Heart right ventricle (tissue), 16 donors: ENCODE measurements at regions of chr2 and their contacts with region 1.

Region 1: DNA sequence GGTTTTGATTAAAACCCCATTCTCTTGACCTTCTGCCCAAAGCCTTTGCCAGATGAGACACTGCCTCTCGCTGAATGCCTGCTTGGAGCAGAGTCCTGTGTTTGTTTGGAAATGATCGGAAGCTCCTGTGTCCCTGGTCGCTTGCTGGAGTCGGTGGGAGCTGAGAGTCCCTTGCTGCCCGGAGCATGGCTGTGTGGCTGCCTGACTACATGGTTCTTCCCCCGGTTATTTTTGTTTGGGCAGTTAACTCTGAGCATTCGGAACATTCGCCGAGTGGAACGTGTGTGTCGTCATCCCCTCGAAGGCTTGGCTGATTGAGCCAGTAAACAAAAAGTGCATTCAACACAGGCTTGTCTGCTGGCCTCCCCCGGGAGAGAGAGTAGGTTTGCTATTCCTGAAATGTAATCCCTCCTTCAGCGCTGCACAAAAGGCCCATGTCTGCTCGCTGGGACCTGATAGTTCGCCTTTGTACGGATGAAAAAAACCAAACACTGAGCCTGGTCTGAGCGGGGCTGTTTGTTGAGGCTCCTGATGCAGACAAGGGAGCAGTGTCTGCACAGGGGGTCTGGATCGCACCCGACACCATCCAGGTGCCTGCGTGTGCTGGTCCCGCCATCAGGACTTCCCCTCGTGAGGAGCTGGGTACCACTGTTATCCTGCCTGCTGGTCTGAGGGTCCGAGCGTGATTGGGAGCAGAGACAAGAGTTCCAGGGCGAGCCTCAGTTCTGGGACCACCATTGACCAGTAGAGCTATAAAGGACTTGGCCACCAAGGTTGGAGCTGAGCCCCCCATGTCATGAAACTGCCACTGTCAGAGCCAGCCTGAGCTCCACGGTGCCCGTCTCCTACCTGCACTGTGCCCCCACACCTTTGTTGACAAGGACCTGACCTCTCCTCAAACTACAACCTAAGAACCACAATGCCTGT is 83.8 kb downstream of the AGAP1 start:
- DNase-seq: peak; percentile 33 to 58
- ATAC-seq: peak; percentile 50 to 89 (median 79)
- H3K4me3 ChIP-seq: peak overlapping the region in 6 of 10 donors; percentile 9 to 31 (median 20)
- H3K27ac ChIP-seq: peak overlapping the region in 4 of 10 donors; percentile 4 to 62 (median 50)
- H3K4me1 ChIP-seq: peaks cover 4 to 34% (median 14%) of the 10 kb centered on the region in 9 donors
- H3K27me3 ChIP-seq: no peaks in the 10 kb centered on the region
- CTCF ChIP-seq: no peak

Region 2: DNA sequence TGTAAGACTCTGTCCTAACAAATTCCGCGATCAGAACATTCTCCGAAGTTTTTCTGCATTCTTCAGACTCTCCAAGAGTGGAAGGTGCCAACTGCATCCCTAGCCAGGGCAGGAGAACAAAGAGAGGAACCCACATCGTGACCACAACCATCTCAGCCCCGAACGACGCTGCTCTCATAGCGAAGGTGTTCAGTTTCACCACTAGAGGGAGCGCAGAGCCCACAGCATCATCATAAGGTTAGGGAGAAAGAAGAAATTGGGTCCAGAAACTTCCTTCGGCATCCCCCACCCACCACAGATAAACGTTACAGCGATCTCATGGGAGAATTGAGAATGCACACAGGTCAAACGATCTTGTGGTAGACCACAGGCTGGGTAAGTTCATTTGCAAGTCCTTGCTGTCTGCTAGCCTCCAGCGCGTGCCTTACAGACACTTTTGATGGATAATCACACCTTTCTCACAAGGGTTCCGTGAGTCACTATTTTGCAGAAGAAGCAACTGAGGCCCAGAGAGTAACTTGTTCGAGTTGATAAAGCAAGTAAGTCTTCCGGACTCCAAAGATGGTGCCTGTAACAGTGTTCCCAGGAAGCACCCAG is 1027.1 kb before region 1 on chr2:
- intact Hi-C with region 1: loop called in 1 of 10 experiments (anchors 5 kb)
- DNase-seq: peak; percentile 48 to 64
- ATAC-seq: peak in 7 of 8 donors; percentile 69 to 88 (median 80)
- H3K4me3 ChIP-seq: no peak overlapping the region
- H3K27ac ChIP-seq: no peak overlapping the region
- H3K4me1 ChIP-seq: peaks cover 0 to 8% (median 0%) of the 10 kb centered on the region in 9 donors
- H3K27me3 ChIP-seq: peaks cover 0 to 17% (median 7%) of the 10 kb centered on the region in 7 donors
- CTCF ChIP-seq: peak; percentile 82 to 98 (median 95)

Region 3: DNA sequence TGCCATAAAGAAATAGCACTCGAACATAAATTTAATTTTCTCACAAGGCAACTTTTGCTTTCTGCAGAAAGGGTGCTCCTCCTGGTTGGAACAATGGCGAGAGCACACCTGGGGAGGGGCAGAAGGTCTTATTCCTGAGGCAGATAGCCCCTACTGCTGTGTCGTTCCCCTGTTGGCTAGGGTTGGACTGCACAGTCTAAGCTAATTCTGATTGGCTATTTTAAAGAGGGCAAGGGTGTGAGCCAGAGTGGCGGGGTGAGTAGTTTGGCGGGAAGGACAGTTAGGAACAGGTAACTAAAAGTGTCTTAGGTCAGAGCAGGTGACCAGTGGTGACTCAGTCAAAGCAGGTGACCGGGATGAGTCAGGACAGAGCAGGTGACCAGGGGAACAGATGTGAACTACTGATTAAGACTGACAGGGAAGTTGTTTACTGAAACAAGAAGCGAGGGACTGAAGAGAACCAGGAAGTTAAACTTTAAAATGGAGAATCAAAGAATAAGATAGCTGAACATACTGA is 133.5 kb before region 1 on chr2:
- intact Hi-C with region 1: loop called in 1 of 10 experiments (anchors 10 kb)
- DNase-seq: no peak
- ATAC-seq: no peak
- H3K4me3 ChIP-seq: no peak overlapping the region
- H3K27ac ChIP-seq: no peak overlapping the region
- H3K4me1 ChIP-seq: no peaks in the 10 kb centered on the region
- H3K27me3 ChIP-seq: peaks cover 0 to 5% (median 0%) of the 10 kb centered on the region in 7 donors
- CTCF ChIP-seq: no peak